ENCODE measurements at regions of chr3 and their contacts with region 1.

Region 1: GRCh38 chr3:107574650-107575049 is 51.9 kb downstream of the BBX start:
- DNase-seq: no peak
- H3K4me3 Mint-ChIP-seq: no peak overlapping the region
- H3K27ac Mint-ChIP-seq: no peak overlapping the region
- H3K4me1 Mint-ChIP-seq: peaks cover 23% of the 10 kb centered on the region
- H3K27me3 Mint-ChIP-seq: no peaks in the 10 kb centered on the region

Region 2: DNA sequence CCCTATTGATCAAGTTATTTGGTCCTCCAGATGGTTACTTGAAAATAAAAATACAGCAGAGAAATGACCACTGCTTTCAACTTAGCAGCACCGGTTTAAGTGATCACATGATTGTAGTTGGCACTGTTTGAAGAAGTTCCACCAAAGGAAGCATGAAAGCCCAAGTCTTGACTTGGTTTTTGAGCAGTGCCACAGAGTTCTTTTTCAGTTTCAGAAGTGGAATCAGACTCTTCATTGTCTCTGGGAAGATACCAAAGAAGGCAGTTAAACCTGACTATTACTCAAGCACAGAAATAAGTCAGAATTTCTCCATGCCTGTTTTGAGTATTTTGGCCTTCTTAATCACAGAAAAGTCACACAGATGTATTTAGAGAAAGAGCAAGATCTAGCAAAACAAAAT is 14.8 kb after region 1 on chr3:
- intact Hi-C with region 1: loop called (anchors 1 kb)
- DNase-seq: no peak
- H3K4me3 Mint-ChIP-seq: no peak overlapping the region
- H3K27ac Mint-ChIP-seq: no peak overlapping the region
- H3K4me1 Mint-ChIP-seq: peaks cover 8% of the 10 kb centered on the region
- H3K27me3 Mint-ChIP-seq: no peaks in the 10 kb centered on the region

Region 3: DNA sequence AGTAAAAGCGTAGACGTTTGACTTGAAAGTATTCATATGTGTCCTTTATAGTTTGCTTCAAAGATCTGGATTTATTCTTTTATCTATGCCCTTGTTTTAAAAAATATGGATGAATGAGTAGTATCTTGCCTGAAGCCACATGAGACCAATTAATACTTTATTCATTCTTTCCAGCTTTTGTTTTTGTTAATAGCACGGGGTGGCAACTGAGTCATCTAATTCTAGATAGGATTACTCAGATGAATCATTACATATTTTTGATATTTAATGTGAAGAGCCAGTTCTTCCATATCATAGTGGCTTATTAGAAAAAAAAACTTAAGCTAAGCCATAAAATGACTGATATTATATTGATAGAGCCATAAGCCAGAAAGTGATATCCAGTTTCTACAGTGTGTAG is 70.0 kb after region 1 on chr3:
- intact Hi-C with region 1: no loop called
- DNase-seq: no peak
- H3K4me3 Mint-ChIP-seq: no peak overlapping the region
- H3K27ac Mint-ChIP-seq: no peak overlapping the region
- H3K4me1 Mint-ChIP-seq: no peaks in the 10 kb centered on the region
- H3K27me3 Mint-ChIP-seq: no peaks in the 10 kb centered on the region

Region 4: DNA sequence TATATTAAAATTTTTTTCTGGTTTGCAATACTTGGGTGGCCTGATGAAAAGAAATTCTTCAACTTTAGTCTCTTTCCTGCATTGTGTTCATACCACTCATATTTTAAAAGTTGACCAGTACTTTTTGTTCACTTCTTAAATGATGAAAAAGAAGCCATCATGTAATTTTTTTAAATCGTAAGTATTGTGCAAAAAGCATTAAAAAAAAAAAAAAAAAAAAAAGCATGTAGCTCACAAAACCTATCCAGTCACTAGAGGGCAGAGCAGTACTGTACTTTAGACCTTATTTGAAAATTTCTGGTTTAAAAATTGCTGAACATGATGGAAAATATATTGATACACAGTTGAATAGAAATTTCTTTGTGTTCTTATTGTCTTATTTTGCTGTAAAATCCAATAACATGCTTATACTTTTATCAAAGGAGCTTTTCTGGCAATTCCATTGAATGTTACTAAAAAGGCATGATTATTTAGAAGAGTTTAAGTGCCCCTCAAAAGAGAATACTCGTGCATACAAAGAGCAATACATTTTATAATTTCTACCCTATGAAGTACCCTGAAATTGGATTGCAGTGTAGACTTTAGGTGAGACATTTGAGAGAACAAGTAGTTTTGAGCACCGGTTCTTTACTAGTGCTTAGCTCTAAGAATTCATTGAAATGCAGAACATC is 85.8 kb after region 1 on chr3:
- intact Hi-C with region 1: loop called (anchors 2 kb)
- DNase-seq: no peak
- H3K4me3 Mint-ChIP-seq: no peak overlapping the region
- H3K27ac Mint-ChIP-seq: no peak overlapping the region
- H3K4me1 Mint-ChIP-seq: peaks cover 12% of the 10 kb centered on the region
- H3K27me3 Mint-ChIP-seq: no peaks in the 10 kb centered on the region

Region 5: GRCh38 chr3:107740992-107741896 is 166.6 kb after region 1 on chr3:
- intact Hi-C with region 1: loop called (anchors 1 kb)
- DNase-seq: no peak
- H3K4me3 Mint-ChIP-seq: no peak overlapping the region
- H3K27ac Mint-ChIP-seq: no peak overlapping the region
- H3K4me1 Mint-ChIP-seq: no peaks in the 10 kb centered on the region
- H3K27me3 Mint-ChIP-seq: no peaks in the 10 kb centered on the region

Region 6: DNA sequence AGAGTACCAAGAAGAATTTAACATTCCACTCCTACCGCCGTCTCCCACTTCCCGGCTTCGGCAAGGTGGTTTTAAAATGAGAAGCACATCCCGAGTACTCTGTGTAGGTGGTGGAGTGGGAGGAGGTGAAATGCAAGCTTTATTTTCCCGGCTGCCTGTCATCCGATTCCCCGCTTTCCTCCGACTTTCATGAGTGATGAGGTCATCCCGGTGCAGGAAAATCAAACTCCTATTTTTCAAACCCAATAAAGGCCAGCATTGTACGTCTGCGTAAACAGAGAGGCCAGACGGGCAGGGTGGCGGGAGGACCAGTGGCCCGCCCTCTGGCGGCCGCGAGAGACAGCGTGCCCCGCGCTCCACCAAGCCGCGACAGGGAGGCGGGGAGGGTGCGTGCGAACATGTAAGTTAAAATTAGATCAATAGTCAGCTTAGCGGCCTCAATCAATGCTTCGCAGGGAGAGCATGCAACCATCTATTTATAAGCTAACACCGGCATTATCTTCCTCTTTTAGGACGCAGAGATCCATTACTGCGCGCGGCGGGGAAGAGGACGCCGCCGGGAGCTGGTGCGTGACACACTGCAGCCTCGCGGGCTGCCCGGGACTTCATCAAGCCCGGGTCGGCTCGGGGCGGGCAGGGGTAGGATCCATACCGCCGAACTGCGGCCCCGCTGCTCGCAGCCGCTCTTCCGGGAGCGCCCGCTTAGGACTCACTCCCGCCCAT is 352.9 kb after region 1 on chr3:
- intact Hi-C with region 1: loop called (anchors 2 kb)
- DNase-seq: peak; percentile 50
- H3K4me3 Mint-ChIP-seq: peak overlapping the region; percentile 85
- H3K27ac Mint-ChIP-seq: no peak overlapping the region
- H3K4me1 Mint-ChIP-seq: peaks cover 9% of the 10 kb centered on the region
- H3K27me3 Mint-ChIP-seq: peaks cover 18% of the 10 kb centered on the region